ENCODE measurements at regions of chr2 and their contacts with region 1.

Region 1: DNA sequence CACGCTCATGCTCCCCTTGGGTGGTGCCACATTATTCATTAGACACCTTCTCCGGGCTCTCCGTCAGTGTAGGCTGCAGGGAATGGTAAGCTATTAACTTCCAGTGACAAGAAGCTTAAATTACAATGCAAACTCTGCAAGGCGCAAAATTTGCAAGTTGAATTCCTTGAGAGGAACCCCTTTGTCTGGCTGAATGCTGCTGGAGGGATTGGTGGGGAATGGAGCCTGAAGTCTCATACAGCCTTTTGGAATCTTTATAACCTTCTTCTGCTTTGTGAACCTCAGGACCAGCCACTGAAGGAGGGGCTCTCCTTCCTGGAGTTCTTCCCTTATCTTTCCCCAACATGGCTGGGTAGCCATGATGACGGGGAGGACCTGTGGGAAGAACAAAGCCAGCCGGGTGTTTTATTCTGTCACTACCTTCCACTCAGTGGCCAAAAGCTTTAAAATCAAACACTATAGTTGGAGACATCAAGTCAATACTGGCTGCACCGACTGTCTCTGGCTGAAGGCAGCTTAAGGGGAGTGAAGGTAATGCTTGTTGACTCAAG is 220.9 kb upstream of the EPHA4 start:
- DNase-seq: peak; percentile 74 to 87
- H3K4me3 ChIP-seq: no peak overlapping the region
- H3K4me3 Mint-ChIP-seq: peak overlapping the region; percentile 20
- H3K27ac Mint-ChIP-seq: peak overlapping the region; percentile 86
- H3K4me1 ChIP-seq: peaks cover 57% of the 10 kb centered on the region
- H3K4me1 Mint-ChIP-seq: peaks cover 39% of the 10 kb centered on the region
- H3K27me3 ChIP-seq: no peaks in the 10 kb centered on the region
- H3K27me3 Mint-ChIP-seq: no peaks in the 10 kb centered on the region
- CTCF ChIP-seq: no peak

Region 2: DNA sequence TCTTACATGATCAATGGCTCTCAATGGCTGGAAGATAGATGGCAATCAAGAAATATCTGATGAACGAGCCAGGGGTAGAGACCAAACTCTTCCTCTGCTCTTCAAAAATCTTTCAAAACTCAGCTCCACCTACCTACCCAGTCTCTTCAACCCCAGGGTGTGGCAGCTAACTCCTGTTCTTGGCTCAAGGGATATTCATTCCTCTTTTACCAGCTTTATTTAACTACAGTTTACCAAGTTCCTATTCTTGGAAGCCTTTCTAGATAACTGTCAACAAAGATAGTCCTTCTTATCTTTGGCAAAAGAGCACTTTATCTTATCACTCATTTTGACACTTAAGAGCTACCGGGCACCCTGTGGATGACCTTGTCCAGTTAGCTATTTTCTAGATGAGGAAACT is 257.2 kb before region 1 on chr2:
- CTCF ChIA-PET with region 1: no interaction called
- POLR2A ChIA-PET with region 1: no interaction called
- intact Hi-C with region 1: loop called (anchors 2 kb)
- DNase-seq: peak; percentile 83 to 84
- H3K4me3 ChIP-seq: no peak overlapping the region
- H3K4me3 Mint-ChIP-seq: peak overlapping the region; percentile 30
- H3K27ac Mint-ChIP-seq: peak overlapping the region; percentile 23
- H3K4me1 ChIP-seq: peaks cover 58% of the 10 kb centered on the region
- H3K4me1 Mint-ChIP-seq: peaks cover 60% of the 10 kb centered on the region
- H3K27me3 ChIP-seq: no peaks in the 10 kb centered on the region
- H3K27me3 Mint-ChIP-seq: no peaks in the 10 kb centered on the region
- CTCF ChIP-seq: no peak

Region 3: DNA sequence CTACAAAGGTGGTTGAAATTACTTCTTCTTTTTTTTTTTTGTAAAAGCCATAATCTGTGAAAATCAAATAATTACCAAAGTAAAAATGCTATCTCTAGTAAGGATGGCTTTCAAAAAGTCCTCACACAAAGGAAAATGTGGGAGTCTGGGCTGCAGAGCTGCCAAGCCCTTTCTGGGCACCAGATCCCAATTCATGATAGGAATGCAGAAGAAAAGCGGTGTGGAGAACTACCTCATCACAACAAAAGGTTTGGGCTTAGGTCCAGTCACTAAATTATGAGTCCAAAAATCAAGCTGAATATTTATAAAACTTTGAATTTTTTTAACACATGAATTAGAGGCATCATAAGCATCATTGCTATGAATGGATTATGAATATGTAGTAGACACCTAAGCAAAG is 190.1 kb before region 1 on chr2:
- CTCF ChIA-PET with region 1: no interaction called
- POLR2A ChIA-PET with region 1: no interaction called
- intact Hi-C with region 1: loop called (anchors 5 kb)
- DNase-seq: no peak
- H3K4me3 ChIP-seq: no peak overlapping the region
- H3K4me3 Mint-ChIP-seq: no peak overlapping the region
- H3K27ac Mint-ChIP-seq: no peak overlapping the region
- H3K4me1 ChIP-seq: peaks cover 59% of the 10 kb centered on the region
- H3K4me1 Mint-ChIP-seq: peaks cover 21% of the 10 kb centered on the region
- H3K27me3 ChIP-seq: no peaks in the 10 kb centered on the region
- H3K27me3 Mint-ChIP-seq: no peaks in the 10 kb centered on the region
- CTCF ChIP-seq: no peak

Region 4: GRCh38 chr2:221731443-221732145 is 61.5 kb before region 1 on chr2:
- CTCF ChIA-PET with region 1: interaction called, 4 read pairs
- POLR2A ChIA-PET with region 1: no interaction called
- intact Hi-C with region 1: loop called (anchors 1 kb)
- DNase-seq: peak; percentile 83 to 90
- H3K4me3 ChIP-seq: no peak overlapping the region
- H3K4me3 Mint-ChIP-seq: peak overlapping the region; percentile 48
- H3K27ac Mint-ChIP-seq: peak overlapping the region; percentile 89
- H3K4me1 ChIP-seq: peaks cover 26% of the 10 kb centered on the region
- H3K4me1 Mint-ChIP-seq: peaks cover 23% of the 10 kb centered on the region
- H3K27me3 ChIP-seq: no peaks in the 10 kb centered on the region
- H3K27me3 Mint-ChIP-seq: no peaks in the 10 kb centered on the region
- CTCF ChIP-seq: no peak

Region 5: GRCh38 chr2:221779614-221780067 is 13.4 kb before region 1 on chr2:
- CTCF ChIA-PET with region 1: interaction called, 3 read pairs
- POLR2A ChIA-PET with region 1: no interaction called
- intact Hi-C with region 1: loop called (anchors 2 kb)
- DNase-seq: no peak
- H3K4me3 ChIP-seq: no peak overlapping the region
- H3K4me3 Mint-ChIP-seq: no peak overlapping the region
- H3K27ac Mint-ChIP-seq: peak overlapping the region; percentile 42
- H3K4me1 ChIP-seq: peaks cover 25% of the 10 kb centered on the region
- H3K4me1 Mint-ChIP-seq: peaks cover 10% of the 10 kb centered on the region
- H3K27me3 ChIP-seq: no peaks in the 10 kb centered on the region
- H3K27me3 Mint-ChIP-seq: no peaks in the 10 kb centered on the region
- CTCF ChIP-seq: no peak

Region 6: GRCh38 chr2:221817052-221817451 is 24.0 kb after region 1 on chr2:
- CTCF ChIA-PET with region 1: no interaction called
- POLR2A ChIA-PET with region 1: no interaction called
- intact Hi-C with region 1: no loop called
- DNase-seq: no peak
- H3K4me3 ChIP-seq: no peak overlapping the region
- H3K4me3 Mint-ChIP-seq: no peak overlapping the region
- H3K27ac Mint-ChIP-seq: no peak overlapping the region
- H3K4me1 ChIP-seq: peaks cover 5% of the 10 kb centered on the region; the same call in 1 of the 2 replicates
- H3K4me1 Mint-ChIP-seq: peaks cover 6% of the 10 kb centered on the region
- H3K27me3 ChIP-seq: no peaks in the 10 kb centered on the region
- H3K27me3 Mint-ChIP-seq: no peaks in the 10 kb centered on the region
- CTCF ChIP-seq: no peak

Region 7: GRCh38 chr2:221848286-221848685 is 55.2 kb after region 1 on chr2:
- CTCF ChIA-PET with region 1: no interaction called
- POLR2A ChIA-PET with region 1: no interaction called
- intact Hi-C with region 1: loop called (anchors 1 kb)
- DNase-seq: peak; percentile 81 to 85
- H3K4me3 ChIP-seq: no peak overlapping the region
- H3K4me3 Mint-ChIP-seq: peak overlapping the region; percentile 27
- H3K27ac Mint-ChIP-seq: peak overlapping the region; percentile 18
- H3K4me1 ChIP-seq: peaks cover 37% of the 10 kb centered on the region
- H3K4me1 Mint-ChIP-seq: peaks cover 39% of the 10 kb centered on the region
- H3K27me3 ChIP-seq: no peaks in the 10 kb centered on the region
- H3K27me3 Mint-ChIP-seq: no peaks in the 10 kb centered on the region
- CTCF ChIP-seq: no peak

Measured in Caco-2 (cell line).